Psoas muscle (tissue), 8 donors: ENCODE measurements at regions of chr11 and their contacts with region 1.

Region 1: GRCh38 chr11:65569973-65570918 is at the start of gene ZNRD2:
- DNase-seq: peak; percentile 99 to 100
- ATAC-seq: peak; percentile 82 to 85 (median 84)
- H3K4me3 ChIP-seq: peak within 1 kb of the TSS; percentile 99
- H3K27ac ChIP-seq: peak within 1 kb of the TSS; percentile 98
- H3K4me1 ChIP-seq: peaks cover 49% of the 10 kb centered on the region
- H3K27me3 ChIP-seq: no peaks in the 10 kb centered on the region
- CTCF ChIP-seq: peak; percentile 49
- total RNA-seq, gene ZNRD2: 31.6 to 43.5 (median 38.0) TPM

Region 2: DNA sequence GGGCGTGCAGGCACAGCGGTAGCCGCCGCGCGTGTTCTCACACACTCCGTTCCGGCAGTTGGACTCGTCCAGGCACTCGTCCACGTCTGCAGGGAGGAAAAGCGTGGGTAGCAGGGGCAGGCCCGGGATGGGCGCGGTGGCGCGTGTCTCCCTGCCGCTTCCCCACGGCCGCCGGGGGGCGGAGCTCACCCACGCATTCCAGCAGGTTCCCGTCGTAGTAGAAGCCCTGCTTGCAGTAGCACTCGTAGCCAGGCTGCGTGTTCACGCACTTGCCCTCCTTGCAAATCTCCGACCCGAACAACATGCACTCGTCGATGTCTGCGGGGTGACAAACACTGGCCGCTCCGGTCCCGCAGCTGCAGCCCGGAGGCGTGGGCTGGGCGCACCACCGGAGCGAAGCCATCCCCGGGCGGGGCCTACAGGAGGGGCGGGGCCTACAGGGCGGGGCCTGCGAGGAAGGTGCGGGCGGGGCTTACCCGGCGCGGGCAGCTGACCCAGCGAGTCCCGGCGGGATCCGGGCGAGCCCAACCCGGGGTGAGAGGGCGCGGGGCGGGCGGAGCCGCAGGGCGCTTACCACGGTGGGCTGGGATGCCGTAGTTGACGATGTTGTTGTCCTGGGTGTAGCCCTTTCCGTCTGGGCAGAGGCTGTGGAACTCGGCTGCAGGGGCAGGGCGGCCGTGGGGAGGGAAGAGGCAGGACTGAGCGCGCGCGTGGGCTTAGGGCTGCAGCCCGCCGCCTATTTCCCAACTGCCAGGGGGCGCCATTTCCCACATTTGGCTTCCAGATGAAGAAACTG is 29.8 kb before region 1 on chr11:
- intact Hi-C with region 1: loop called in 1 of 2 experiments (anchors 1 kb)
- DNase-seq: peak; percentile 89 to 95
- ATAC-seq: peak; percentile 85 to 95 (median 93)
- H3K4me3 ChIP-seq: peak overlapping the region; percentile 65
- H3K27ac ChIP-seq: peak overlapping the region; percentile 84
- H3K4me1 ChIP-seq: peaks cover 16% of the 10 kb centered on the region
- H3K27me3 ChIP-seq: no peaks in the 10 kb centered on the region
- CTCF ChIP-seq: peak; percentile 77

Region 3: DNA sequence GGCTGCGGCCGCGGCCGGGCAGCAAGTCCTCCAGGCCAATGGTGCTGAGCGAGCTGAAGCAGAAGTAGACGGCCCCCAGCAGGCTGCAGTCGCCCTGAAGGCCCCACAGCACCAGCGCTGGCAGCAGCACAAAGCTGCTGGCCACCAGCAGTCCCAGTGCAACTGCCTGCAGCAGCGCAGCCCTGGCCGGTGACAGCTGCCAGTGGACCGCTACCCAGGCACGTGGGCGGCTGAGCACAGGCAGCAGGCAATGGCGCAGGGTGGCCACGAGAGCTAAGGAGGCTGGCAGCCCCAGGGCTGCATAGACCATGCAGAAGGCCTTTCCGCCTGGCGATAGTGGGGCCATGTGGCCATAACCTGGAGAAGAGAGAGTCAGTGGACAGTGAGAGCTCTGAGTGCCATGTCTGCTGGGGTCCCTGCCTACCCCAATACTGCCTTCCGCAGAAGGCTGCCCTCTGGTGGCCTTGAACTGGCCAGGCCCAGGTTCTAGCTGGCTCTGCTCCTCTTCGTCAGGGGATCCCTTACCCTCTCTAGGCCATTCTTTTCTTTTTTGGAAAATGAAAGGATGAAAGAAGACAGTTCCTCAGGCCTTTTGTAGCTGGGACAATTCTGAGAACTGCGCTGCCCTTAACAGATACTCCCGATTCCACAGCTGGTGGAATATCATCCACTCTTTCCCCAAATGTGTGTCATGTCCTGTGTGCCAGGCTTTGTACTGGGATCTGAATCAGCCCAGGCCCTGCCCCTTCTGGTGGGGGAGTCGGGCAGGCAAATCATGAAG is 23.5 kb after region 1 on chr11:
- intact Hi-C with region 1: loop called (anchors 2 kb)
- DNase-seq: peak in 1 of 2 donors; percentile 87
- ATAC-seq: peak; percentile 72 to 79 (median 74)
- H3K4me3 ChIP-seq: no peak overlapping the region
- H3K27ac ChIP-seq: peak overlapping the region; percentile 91
- H3K4me1 ChIP-seq: peaks cover 51% of the 10 kb centered on the region
- H3K27me3 ChIP-seq: no peaks in the 10 kb centered on the region
- CTCF ChIP-seq: peak; percentile 82

Region 4: GRCh38 chr11:65606876-65607613 is 36.8 kb after region 1 on chr11:
- intact Hi-C with region 1: loop called (anchors 5 kb)
- DNase-seq: peak; percentile 96 to 97
- ATAC-seq: peak; percentile 98
- H3K4me3 ChIP-seq: peak overlapping the region; percentile 61
- H3K27ac ChIP-seq: peak overlapping the region; percentile 83
- H3K4me1 ChIP-seq: peaks cover 28% of the 10 kb centered on the region
- H3K27me3 ChIP-seq: no peaks in the 10 kb centered on the region
- CTCF ChIP-seq: no peak

Region 5: GRCh38 chr11:65615229-65615941 is 45.1 kb after region 1 on chr11 and contains the start of gene PCNX3:
- intact Hi-C with region 1: loop called in 1 of 2 experiments (anchors 5 kb)
- DNase-seq: peak; percentile 100
- ATAC-seq: peak; percentile 85 to 88 (median 85)
- H3K4me3 ChIP-seq: peak within 1 kb of the TSS; percentile 97
- H3K27ac ChIP-seq: peak within 1 kb of the TSS; percentile 89
- H3K4me1 ChIP-seq: peaks cover 35% of the 10 kb centered on the region
- H3K27me3 ChIP-seq: no peaks in the 10 kb centered on the region
- CTCF ChIP-seq: no peak
- total RNA-seq, gene PCNX3: 8.9 to 10.8 (median 9.7) TPM

Region 6: GRCh38 chr11:65662799-65663638 is 92.8 kb after region 1 on chr11 and contains the start of gene RELA:
- intact Hi-C with region 1: no loop called
- DNase-seq: peak; percentile 95 to 97
- ATAC-seq: peak; percentile 90 to 93 (median 92)
- H3K4me3 ChIP-seq: peak within 1 kb of the TSS; percentile 88
- H3K27ac ChIP-seq: peak within 1 kb of the TSS; percentile 94
- H3K4me1 ChIP-seq: peaks cover 17% of the 10 kb centered on the region
- H3K27me3 ChIP-seq: no peaks in the 10 kb centered on the region
- CTCF ChIP-seq: no peak
- total RNA-seq, gene RELA: 48.7 to 72.6 (median 65.2) TPM